ENCODE measurements at regions of chr9 and their contacts with region 1.

Region 1: DNA sequence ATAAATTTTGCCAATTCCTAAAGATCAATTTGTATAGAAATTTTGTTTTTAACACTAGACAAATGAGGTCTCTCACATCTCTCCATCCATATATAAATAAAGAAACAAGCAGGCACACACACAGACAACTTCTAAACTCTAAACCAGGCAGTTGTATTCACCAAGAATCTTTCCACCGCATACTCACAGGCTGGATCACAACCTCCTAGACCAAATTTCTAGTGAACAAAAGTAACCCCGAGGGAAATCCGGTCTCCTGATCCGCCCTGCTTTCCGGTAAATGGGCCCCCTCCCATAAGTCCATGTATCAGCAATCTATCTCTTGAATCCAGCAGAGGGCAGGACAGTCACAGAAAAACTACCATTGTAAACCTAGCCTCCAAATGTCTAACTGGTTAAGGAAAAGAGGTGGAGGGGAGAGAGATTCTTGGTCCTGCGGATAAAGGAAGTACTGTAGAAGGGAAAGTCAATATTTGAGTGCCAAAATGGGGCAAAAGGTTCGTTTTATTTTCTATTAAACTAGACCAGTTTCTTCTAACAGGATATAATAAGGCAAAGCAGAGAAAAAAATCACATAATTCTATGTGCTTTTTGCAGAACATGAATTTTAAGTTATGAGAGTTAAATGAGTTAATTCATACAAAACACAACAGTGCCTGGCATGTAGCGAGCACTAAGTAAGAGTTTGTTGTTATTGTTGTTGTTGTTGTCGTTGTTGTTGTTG is 4.8 kb upstream of the SMU1 start:
- DNase-seq: peak; percentile 68 to 83 (median 78)
- H3K4me3 ChIP-seq: no peak overlapping the region
- H3K27ac ChIP-seq: peak overlapping the region in 3 of 5 donors; percentile 17 to 47 (median 42)
- H3K4me1 ChIP-seq: peaks cover 0 to 10% of the 10 kb centered on the region in 2 donors
- H3K27me3 ChIP-seq: no peaks in the 10 kb centered on the region
- CTCF ChIP-seq: peak; percentile 50 to 99 (median 93)
- POLR2A ChIP-seq: no peak

Region 2: DNA sequence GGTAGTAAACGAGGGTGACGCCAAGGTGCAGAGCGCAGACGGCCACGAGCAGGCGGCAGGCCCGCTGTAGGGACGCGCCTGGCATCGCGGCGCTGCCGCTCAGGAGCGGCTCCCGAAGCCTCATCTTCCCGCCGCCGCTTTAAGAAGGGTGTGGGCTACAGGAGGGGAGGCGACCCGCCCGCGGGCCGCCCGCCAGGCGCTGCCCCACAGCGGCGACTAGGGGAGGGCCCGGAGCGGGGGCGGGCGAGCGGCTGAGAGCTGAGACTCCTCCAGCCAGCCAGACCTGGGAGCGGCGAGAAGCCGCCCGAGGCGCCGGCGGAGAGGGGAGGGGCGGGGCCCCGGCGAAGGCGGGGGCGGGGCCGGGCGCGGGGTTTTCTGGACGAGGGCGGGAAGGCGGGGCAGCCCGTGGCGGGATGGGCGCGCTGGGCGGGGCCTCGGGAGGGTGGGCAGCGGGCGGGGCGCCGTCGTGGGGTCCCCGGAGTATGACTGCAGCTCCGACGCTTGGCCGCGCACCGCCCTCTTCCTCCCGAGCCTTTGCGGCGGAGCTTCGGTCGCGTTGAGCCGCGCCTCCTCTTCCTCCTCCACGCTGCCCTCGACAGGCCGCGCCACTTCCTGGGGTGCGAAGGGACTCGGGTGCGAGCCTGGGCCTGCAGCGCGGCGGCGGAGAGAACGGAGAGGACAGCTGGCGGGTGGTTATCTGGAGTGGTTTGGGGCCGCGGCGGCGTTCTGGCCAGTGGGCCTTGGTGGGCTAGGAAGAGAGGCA is 85.9 kb after region 1 on chr9 and contains the start of gene B4GALT1:
- intact Hi-C with region 1: loop called in 1 of 2 experiments (anchors 5 kb)
- DNase-seq: peak; percentile 94 to 98 (median 96)
- H3K4me3 ChIP-seq: peak within 1 kb of the TSS; percentile 56 to 99 (median 84)
- H3K27ac ChIP-seq: peak within 1 kb of the TSS; percentile 82 to 99 (median 96)
- H3K4me1 ChIP-seq: peaks cover 44 to 61% of the 10 kb centered on the region in 2 donors
- H3K27me3 ChIP-seq: no peaks in the 10 kb centered on the region
- CTCF ChIP-seq: peak in 1 of 6 experiments; percentile 21
- POLR2A ChIP-seq: peak; percentile 84 to 89
- total RNA-seq, gene B4GALT1: 23.8 to 117 (median 67.6) TPM

Region 3: DNA sequence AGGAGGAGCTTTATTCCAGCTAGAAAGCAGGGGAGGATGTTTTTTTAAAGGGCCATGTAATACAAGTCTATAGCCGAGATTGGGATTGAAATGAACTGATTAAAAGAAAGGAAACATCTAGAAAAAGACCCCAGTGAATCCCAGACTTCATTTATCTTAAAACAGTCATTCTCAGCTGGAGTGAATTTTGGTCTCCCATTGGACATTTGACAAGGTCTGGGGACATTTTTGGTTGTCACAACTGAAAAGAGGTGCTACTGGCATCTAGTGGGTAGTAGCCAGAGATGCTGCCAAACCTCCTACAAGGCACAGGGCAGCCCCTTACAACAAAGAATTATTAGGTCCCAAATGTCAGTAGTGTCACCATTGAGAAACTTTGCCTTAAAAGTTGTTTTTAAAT is 142.4 kb after region 1 on chr9:
- intact Hi-C with region 1: loop called (anchors 2 kb)
- DNase-seq: no peak
- H3K4me3 ChIP-seq: no peak overlapping the region
- H3K27ac ChIP-seq: no peak overlapping the region
- H3K4me1 ChIP-seq: peaks cover 5% of the 10 kb centered on the region in 2 donors
- H3K27me3 ChIP-seq: no peaks in the 10 kb centered on the region
- CTCF ChIP-seq: peak in 1 of 6 experiments; percentile 11
- POLR2A ChIP-seq: no peak

Measured in adrenal gland (tissue), 19 donors.